Vagina (tissue), 2 donors: ENCODE measurements at regions of chr1 and their contacts with region 1.

Region 1: GRCh38 chr1:221435504-221435904 is 306.4 kb downstream of the DUSP10 start:
- DNase-seq: no peak
- H3K4me3 ChIP-seq: no peak overlapping the region
- H3K27ac ChIP-seq: no peak overlapping the region
- H3K4me1 ChIP-seq: peaks cover 6% of the 10 kb centered on the region
- H3K27me3 ChIP-seq: no peaks in the 10 kb centered on the region
- CTCF ChIP-seq: peak; percentile 83 to 91 (median 84)
- POLR2A ChIP-seq: no peak

Region 2: GRCh38 chr1:220810179-220810653 is 625.3 kb before region 1 on chr1:
- intact Hi-C with region 1: loop called (anchors 10 kb)
- DNase-seq: peak in 1 of 2 donors; percentile 88
- H3K4me3 ChIP-seq: peak overlapping the region; percentile 6 to 17
- H3K27ac ChIP-seq: no peak overlapping the region
- H3K4me1 ChIP-seq: no peaks in the 10 kb centered on the region
- H3K27me3 ChIP-seq: no peaks in the 10 kb centered on the region
- CTCF ChIP-seq: peak; percentile 69 to 89 (median 85)
- POLR2A ChIP-seq: no peak

Region 3: DNA sequence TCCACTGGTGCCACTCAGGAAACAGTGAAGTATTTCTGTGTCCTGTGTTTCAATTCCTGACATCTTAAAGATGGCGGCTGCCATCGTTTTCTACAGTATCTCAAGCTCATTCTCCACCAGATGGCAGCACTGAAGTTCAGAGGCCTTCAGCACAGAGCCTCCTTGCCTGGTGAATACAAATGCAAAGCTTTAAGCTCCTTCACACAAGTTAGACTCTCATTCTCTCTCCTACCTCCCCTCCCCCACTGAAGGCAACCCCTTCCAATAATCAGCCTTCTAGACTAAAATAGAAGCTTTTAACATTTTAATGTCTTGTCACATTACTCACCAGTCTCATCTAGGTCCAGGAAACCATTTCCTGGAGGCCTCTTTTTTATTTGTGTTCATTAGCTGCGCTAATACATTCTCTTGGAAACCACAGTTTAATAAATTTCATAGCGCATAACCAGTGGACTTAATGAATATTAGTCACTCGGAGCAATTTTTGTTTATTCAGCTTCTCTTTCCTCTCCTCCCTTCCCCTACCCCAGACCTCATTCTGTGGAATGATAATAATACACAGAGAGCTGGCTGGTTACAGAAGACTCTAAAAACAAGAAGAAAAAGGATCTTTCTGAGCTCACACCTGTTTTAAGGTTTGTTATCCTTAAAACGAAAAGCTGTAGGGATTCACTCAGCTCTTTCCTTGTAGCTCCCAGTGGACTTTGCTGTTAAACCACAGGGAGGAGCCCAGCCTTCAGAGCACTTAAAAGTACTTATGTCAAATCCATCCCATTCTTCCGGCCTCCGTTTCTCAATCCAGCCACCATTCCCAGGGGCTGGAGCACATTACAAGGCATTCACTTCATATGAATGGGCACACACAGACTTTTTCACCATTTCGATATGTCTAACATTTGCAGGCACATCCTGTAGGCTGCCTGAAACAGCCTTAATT is 171.4 kb before region 1 on chr1:
- intact Hi-C with region 1: loop called (anchors 5 kb)
- DNase-seq: no peak
- H3K4me3 ChIP-seq: no peak overlapping the region
- H3K27ac ChIP-seq: no peak overlapping the region
- H3K4me1 ChIP-seq: no peaks in the 10 kb centered on the region
- H3K27me3 ChIP-seq: no peaks in the 10 kb centered on the region
- CTCF ChIP-seq: peak in 2 of 3 experiments; percentile 13 to 52
- POLR2A ChIP-seq: no peak

Region 4: DNA sequence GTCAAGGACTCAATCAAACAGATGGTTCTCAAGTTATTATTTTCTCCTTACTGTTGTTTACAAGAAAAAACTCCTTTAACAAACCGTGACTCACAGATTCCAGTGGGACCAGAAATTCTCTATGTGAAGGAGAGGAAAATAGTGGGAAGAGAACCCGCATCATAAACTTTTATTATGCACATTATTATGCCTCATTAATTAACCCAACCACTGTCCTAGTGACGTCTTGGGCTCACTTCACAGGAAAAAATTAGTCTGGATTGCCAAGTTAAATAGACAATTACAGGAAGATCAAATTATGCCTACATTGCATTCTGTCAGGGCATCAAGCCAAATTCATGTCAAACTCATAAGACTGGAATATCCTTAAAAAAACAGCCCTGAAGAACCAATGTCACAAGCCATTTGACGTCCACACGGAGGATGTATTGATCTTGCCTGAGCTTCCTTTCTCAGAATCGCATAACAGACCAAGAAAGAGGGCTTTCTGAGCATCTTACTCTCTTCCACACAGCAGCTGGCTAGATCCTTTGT is 41.4 kb before region 1 on chr1:
- intact Hi-C with region 1: no loop called
- DNase-seq: no peak
- H3K4me3 ChIP-seq: no peak overlapping the region
- H3K27ac ChIP-seq: no peak overlapping the region
- H3K4me1 ChIP-seq: peaks cover 22% of the 10 kb centered on the region
- H3K27me3 ChIP-seq: no peaks in the 10 kb centered on the region
- CTCF ChIP-seq: no peak
- POLR2A ChIP-seq: no peak

Region 5: GRCh38 chr1:221503268-221503667 is 67.8 kb after region 1 on chr1:
- intact Hi-C with region 1: no loop called
- DNase-seq: no peak
- H3K4me3 ChIP-seq: no peak overlapping the region
- H3K27ac ChIP-seq: no peak overlapping the region
- H3K4me1 ChIP-seq: no peaks in the 10 kb centered on the region
- H3K27me3 ChIP-seq: no peaks in the 10 kb centered on the region
- CTCF ChIP-seq: no peak
- POLR2A ChIP-seq: no peak

Region 6: GRCh38 chr1:221522529-221522940 is 87.0 kb after region 1 on chr1:
- intact Hi-C with region 1: no loop called
- DNase-seq: no peak
- H3K4me3 ChIP-seq: no peak overlapping the region
- H3K27ac ChIP-seq: no peak overlapping the region
- H3K4me1 ChIP-seq: no peaks in the 10 kb centered on the region
- H3K27me3 ChIP-seq: no peaks in the 10 kb centered on the region
- CTCF ChIP-seq: no peak
- POLR2A ChIP-seq: no peak

Region 7: DNA sequence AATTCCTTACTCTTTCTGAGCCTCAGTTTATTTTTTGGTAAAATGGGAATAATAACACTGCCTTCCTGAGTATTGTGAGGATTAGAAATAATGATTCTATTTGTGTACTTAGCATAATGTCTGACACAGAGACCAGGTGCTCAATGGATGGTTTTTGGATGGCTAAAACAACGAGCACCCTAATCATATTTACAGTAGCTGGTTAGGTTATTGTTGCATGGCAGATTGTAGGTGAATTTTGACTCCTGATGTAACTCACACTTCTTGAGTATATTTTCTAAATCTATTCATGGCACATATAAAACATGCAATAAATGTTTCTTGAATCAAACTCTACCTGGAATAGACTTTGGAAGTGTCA is 318.3 kb after region 1 on chr1:
- intact Hi-C with region 1: no loop called
- DNase-seq: no peak
- H3K4me3 ChIP-seq: no peak overlapping the region
- H3K27ac ChIP-seq: no peak overlapping the region
- H3K4me1 ChIP-seq: no peaks in the 10 kb centered on the region
- H3K27me3 ChIP-seq: no peaks in the 10 kb centered on the region
- CTCF ChIP-seq: no peak
- POLR2A ChIP-seq: no peak